ENCODE measurements at regions of chr10 and their contacts with region 1.

Region 1: GRCh38 chr10:60769406-60769805 is 8.9 kb upstream of the CDK1 start:
- DNase-seq: no peak
- H3K4me3 ChIP-seq: no peak overlapping the region
- H3K27ac ChIP-seq: no peak overlapping the region
- H3K4me1 ChIP-seq: peaks cover 7% of the 10 kb centered on the region
- H3K27me3 ChIP-seq: no peaks in the 10 kb centered on the region
- CTCF ChIP-seq: no peak

Region 2: GRCh38 chr10:60032723-60033122 is 736.7 kb before region 1 on chr10:
- CTCF ChIA-PET with region 1: no interaction called
- dilution Hi-C with region 1: no loop called
- in situ Hi-C with region 1: no loop called
- intact Hi-C with region 1: no loop called
- DNase-seq: peak; percentile 59
- H3K4me3 ChIP-seq: no peak overlapping the region
- H3K27ac ChIP-seq: no peak overlapping the region
- H3K4me1 ChIP-seq: no peaks in the 10 kb centered on the region
- H3K27me3 ChIP-seq: no peaks in the 10 kb centered on the region
- CTCF ChIP-seq: peak; percentile 69 to 71

Region 3: GRCh38 chr10:60099998-60100747 is 669.2 kb before region 1 on chr10:
- CTCF ChIA-PET with region 1: no interaction called
- dilution Hi-C with region 1: no loop called
- in situ Hi-C with region 1: no loop called
- intact Hi-C with region 1: loop called (anchors 2 kb)
- DNase-seq: peak; percentile 23
- H3K4me3 ChIP-seq: no peak overlapping the region
- H3K27ac ChIP-seq: no peak overlapping the region
- H3K4me1 ChIP-seq: no peaks in the 10 kb centered on the region
- H3K27me3 ChIP-seq: no peaks in the 10 kb centered on the region
- CTCF ChIP-seq: peak; percentile 43 to 59

Region 4: DNA sequence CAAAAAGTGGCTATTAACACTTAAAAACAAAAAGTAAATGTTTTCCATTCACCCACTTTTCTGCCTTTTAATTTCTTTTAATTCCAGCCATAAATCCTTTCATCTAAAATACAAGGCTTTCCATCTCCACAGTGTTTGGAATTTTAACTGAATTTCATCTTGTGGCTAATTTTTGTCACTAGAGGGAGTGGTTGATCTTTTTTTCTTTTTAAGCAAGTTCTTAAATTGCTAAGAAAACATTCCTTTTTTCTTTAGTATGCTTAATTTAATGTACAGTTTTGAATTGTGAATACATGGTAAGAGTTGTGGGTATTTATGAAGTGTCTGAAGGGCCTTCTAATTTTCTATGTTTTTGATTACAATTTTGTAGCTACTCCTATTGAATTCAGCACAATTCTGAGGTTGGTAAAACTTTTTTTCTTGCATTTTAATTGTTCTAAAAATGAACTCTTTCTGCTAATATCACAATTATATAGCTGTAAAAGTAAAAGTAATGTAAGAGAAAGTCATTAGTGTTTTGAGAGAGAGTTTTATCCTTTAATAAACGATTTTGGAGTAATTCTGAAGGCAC is 324.8 kb before region 1 on chr10:
- CTCF ChIA-PET with region 1: no interaction called
- dilution Hi-C with region 1: no loop called
- in situ Hi-C with region 1: loop called in 1 of 2 experiments (anchors 25 kb)
- intact Hi-C with region 1: loop called (anchors 1 kb)
- DNase-seq: no peak
- H3K4me3 ChIP-seq: no peak overlapping the region
- H3K27ac ChIP-seq: no peak overlapping the region
- H3K4me1 ChIP-seq: peaks cover 25% of the 10 kb centered on the region
- H3K27me3 ChIP-seq: no peaks in the 10 kb centered on the region
- CTCF ChIP-seq: peak; percentile 47 to 54

Region 5: DNA sequence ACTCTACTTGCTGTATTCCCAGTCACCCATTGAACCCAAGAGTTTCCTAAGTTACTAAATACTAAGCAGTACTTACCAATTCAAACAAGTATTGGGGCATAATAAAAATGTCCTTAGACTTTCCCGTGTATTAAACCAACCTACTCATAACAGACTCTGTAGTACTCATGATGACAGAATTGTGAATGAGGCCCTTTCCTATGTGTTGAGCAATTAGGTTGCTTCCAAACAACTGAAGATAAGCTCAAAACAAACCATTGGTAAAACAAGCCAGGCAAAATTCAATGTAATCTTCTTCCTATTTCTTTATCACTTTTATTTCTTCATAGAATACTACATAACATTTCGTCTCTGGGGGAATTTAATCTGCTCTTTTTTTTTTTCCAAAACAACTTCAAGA is 273.2 kb before region 1 on chr10:
- CTCF ChIA-PET with region 1: interaction called, 10 read pairs
- dilution Hi-C with region 1: no loop called
- in situ Hi-C with region 1: no loop called
- intact Hi-C with region 1: no loop called
- DNase-seq: no peak
- H3K4me3 ChIP-seq: no peak overlapping the region
- H3K27ac ChIP-seq: no peak overlapping the region
- H3K4me1 ChIP-seq: peaks cover 12% of the 10 kb centered on the region
- H3K27me3 ChIP-seq: no peaks in the 10 kb centered on the region
- CTCF ChIP-seq: no peak

Region 6: DNA sequence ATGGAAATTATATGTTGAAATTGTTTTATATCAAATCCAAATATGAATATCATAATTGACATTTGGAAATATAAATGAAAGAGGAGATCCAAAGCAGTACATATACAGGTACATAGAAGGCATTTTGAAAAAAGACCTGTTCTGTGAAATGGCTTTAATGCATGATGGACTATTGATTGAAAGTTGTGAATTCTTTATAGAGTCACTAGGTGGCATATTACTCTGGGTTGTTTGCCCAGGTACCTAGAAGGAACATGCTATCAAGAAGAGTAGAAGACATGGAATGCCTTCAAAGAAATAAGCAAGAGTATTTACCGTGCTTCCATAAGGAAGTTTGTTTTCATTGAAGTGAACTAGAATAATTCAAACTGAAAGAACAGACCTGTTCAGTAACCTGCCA is 219.7 kb before region 1 on chr10:
- CTCF ChIA-PET with region 1: no interaction called
- dilution Hi-C with region 1: no loop called
- in situ Hi-C with region 1: no loop called
- intact Hi-C with region 1: loop called (anchors 1 kb)
- DNase-seq: peak; percentile 38
- H3K4me3 ChIP-seq: no peak overlapping the region
- H3K27ac ChIP-seq: no peak overlapping the region
- H3K4me1 ChIP-seq: no peaks in the 10 kb centered on the region
- H3K27me3 ChIP-seq: no peaks in the 10 kb centered on the region
- CTCF ChIP-seq: peak; percentile 30 to 61

Region 7: GRCh38 chr10:60646966-60647796 is 122.2 kb before region 1 on chr10:
- CTCF ChIA-PET with region 1: interaction called, 5 read pairs
- dilution Hi-C with region 1: no loop called
- in situ Hi-C with region 1: loop called in 1 of 2 experiments (anchors 10 kb)
- intact Hi-C with region 1: loop called (anchors 2 kb)
- DNase-seq: peak; percentile 31
- H3K4me3 ChIP-seq: no peak overlapping the region
- H3K27ac ChIP-seq: no peak overlapping the region
- H3K4me1 ChIP-seq: no peaks in the 10 kb centered on the region
- H3K27me3 ChIP-seq: no peaks in the 10 kb centered on the region
- CTCF ChIP-seq: peak; percentile 60 to 71

Region 8: GRCh38 chr10:60733189-60733822 is 36.1 kb before region 1 on chr10:
- CTCF ChIA-PET with region 1: no interaction called
- dilution Hi-C with region 1: no loop called
- in situ Hi-C with region 1: no loop called
- intact Hi-C with region 1: loop called (anchors 1 kb)
- DNase-seq: peak; percentile 73
- H3K4me3 ChIP-seq: peak overlapping the region; percentile 47 to 82 (median 74)
- H3K27ac ChIP-seq: peak overlapping the region; percentile 43
- H3K4me1 ChIP-seq: peaks cover 15% of the 10 kb centered on the region
- H3K27me3 ChIP-seq: no peaks in the 10 kb centered on the region
- CTCF ChIP-seq: peak; percentile 32 to 54

Measured in mammary epithelial cell (primary cell).